Heart right ventricle (tissue), 16 donors: ENCODE measurements at regions of chr15 and their contacts with region 1.

Region 1: GRCh38 chr15:59933607-59934006 is 70.5 kb upstream of the FOXB1 start:
- DNase-seq: no peak
- ATAC-seq: no peak
- H3K4me3 ChIP-seq: no peak overlapping the region
- H3K27ac ChIP-seq: no peak overlapping the region
- H3K4me1 ChIP-seq: no peaks in the 10 kb centered on the region
- H3K27me3 ChIP-seq: peaks cover 0 to 78% (median 47%) of the 10 kb centered on the region in 7 donors
- CTCF ChIP-seq: no peak

Region 2: DNA sequence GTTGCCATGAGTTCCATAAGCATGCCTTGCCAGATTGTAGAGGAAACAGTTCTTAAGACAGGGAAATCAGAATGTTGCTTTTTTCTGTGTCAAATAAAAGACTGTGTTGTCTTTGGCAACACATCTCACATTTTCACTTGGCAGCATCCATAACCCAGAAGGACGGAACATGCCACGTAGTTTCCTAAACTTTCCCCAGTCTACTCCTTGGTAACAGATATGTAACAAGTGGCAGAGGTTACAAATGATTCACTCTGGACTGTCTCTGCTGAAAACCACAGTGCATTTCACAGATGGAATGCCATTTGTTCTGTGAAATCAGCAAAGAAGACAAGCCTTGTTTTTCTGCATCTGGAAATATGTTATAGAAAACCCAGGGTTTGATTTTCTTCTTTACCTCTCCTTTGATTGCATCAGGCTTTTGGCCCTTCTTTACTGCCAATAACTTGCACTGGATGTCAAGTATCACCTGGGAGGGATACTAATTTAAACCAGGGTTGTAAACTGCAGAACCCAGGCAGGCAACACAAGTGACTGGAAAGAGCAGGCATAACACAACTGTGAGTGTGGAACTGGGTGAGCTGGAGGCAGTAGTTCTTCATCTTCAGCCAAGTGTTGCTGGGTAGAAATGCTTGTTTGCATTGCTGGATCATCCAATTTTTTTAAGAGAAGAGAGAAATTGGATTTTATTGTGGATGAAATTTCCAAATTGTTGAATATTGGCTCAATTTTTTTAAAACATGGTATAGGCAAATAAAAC is 53.9 kb before region 1 on chr15:
- intact Hi-C with region 1: loop called in 1 of 10 experiments (anchors 10 kb)
- DNase-seq: no peak
- ATAC-seq: no peak
- H3K4me3 ChIP-seq: no peak overlapping the region
- H3K27ac ChIP-seq: no peak overlapping the region
- H3K4me1 ChIP-seq: no peaks in the 10 kb centered on the region
- H3K27me3 ChIP-seq: peaks cover 0 to 66% (median 55%) of the 10 kb centered on the region in 7 donors
- CTCF ChIP-seq: no peak

Region 3: DNA sequence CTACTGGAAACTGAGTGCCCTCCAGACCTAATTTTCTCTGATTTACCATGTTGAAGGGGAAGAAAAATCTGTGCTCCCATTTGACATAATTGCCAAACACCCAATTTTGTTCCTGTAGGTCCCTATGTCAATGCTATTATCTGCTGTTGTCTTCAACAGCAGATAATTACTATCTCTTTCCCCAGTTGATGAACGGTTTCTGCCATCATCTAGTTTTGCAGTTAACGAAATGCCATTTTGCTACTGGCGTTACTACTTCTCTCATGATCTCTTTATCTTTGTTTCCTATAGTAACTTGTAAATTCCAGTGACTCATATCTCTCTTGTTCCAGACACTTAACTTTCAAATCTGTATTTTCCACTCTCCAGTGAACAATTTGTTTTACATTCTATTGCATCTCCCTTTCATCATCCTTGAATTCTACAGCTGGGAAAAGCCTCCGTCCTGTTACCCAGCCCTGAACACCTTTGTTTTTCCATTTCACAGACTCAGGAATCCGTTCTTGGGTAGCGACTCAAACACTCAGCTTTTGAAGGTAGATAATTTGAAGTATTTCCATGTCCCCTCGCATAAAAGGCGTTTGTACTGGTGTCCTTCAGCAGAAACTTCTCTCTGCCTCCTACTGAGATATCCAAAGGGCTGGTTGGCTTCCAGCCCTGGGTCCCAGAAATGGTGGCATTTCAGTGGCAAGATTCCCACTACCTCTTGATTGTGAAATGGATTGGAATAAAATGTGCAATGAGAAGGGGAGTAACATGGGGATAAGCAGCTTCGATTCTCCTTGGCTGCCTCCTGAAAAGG is 182.2 kb after region 1 on chr15:
- intact Hi-C with region 1: loop called in 1 of 10 experiments (anchors 10 kb)
- DNase-seq: no peak
- ATAC-seq: no peak
- H3K4me3 ChIP-seq: no peak overlapping the region
- H3K27ac ChIP-seq: no peak overlapping the region
- H3K4me1 ChIP-seq: no peaks in the 10 kb centered on the region
- H3K27me3 ChIP-seq: peaks cover 0 to 68% (median 55%) of the 10 kb centered on the region in 7 donors
- CTCF ChIP-seq: no peak

Region 4: DNA sequence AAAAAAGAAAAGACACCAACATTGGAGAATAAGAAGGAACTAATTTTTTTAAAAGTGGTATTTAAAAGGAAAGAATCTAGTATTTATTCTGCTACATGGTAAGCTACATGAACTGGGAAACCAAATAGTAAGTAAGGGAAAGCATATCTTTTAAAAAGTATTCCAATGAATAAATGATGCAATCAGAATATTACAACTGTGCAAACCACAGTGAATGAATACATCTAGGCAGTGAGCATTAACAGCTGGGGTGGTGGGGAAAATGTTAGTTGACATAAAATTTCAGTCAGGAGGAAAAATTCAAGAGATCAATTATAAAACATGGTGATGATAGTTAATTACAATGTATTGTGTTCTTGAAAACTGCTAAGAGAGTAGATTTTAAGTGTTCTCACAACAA is 528.4 kb after region 1 on chr15:
- intact Hi-C with region 1: no loop called
- DNase-seq: no peak
- ATAC-seq: no peak
- H3K4me3 ChIP-seq: no peak overlapping the region
- H3K27ac ChIP-seq: no peak overlapping the region
- H3K4me1 ChIP-seq: no peaks in the 10 kb centered on the region
- H3K27me3 ChIP-seq: no peaks in the 10 kb centered on the region
- CTCF ChIP-seq: no peak